Left ventricle myocardium superior (tissue), 1 donor: ENCODE measurements at regions of chr14 and their contacts with region 1.

Region 1: GRCh38 chr14:104768437-104769323 is 15.7 kb downstream of the SIVA1 start:
- DNase-seq: peak; percentile 94
- ATAC-seq: peak; percentile 90

Region 2: DNA sequence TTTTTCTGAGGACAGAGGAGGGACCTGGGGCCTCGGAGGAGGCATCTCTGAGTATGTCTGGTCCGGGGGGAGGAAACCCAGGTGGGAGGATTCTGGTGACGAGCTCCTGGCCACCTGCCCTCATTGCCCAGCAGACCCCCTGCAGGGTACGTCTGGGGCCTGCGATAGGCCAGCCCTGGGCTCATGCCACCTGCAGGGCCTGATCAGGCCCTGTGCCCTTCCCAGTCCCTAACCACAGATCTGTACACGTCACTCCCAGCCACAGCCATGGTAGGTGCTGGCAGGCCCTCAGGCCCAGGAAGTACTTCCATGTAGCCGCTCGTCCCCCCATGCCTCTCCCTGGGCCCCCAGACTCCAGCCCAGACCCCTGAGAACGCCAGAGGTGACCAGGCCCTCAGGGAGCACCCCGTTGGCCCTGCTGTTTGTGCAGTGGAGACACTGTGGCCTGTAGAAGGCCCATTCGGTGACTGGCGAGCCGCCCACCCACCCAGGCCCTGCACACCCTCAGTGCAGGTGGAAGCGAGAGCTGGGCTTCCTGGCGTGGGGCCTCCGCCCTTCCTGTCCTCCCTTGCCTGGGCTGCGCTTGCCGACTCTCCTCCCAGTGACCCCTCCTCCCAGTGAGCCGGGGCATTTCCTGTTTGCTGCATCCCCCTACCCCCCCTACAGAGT is 73.6 kb before region 1 on chr14:
- intact Hi-C with region 1: no loop called
- DNase-seq: peak; percentile 65
- ATAC-seq: peak; percentile 26

Region 3: GRCh38 chr14:104826189-104826860 is 57.6 kb after region 1 on chr14:
- intact Hi-C with region 1: loop called (anchors 10 kb)
- DNase-seq: peak; percentile 96
- ATAC-seq: peak; percentile 92